GM12878 (cell line): ENCODE measurements at regions of chr2 and their contacts with region 1.

Region 1: DNA sequence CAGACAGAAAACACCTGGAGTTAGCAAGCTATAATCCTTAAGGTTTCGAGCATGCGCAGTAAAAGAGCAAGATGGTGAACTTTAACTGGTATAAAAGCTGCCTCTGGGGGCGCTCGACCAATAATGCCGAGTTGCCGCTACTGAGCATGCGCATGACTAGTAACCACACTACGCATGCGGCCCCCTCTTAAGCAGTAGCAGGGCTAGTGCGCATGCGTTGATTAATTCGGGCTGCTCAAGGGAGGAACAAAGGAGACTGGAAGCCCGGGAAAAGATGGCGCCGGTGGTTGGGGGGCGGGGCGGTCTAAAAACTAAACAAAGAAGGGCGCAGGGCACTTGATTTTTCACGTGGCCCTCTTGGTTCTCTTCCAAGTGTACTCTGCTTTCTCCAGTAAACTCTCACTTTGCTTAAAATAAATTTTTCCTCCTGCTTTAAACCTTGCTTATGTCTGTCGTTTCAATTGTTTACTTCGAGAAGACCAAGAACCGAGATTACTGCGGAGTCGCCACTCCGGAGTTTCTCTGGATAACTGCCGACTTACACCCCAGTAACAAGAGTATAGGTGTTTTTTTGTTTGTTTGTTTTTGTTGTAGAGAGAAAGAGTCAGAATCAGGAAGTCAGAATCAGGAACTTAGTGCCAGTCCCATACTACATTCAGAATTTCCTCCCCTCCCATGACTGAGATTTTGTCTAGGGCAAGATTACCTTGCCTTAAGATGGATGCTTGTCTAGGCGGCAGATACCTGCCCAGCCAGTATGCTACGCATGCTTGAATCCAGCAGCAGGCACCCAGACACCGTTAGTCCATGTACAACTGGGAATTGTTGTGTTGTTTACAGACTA is 5.8 kb downstream of the XRCC5 start:
- DNase-seq: peak; percentile 94
- ATAC-seq: peak; percentile 71
- H3K4me3 ChIP-seq: peak overlapping the region; percentile 93
- H3K27ac ChIP-seq: peak overlapping the region; percentile 99
- H3K4me1 ChIP-seq: peaks cover 29% of the 10 kb centered on the region
- H3K27me3 ChIP-seq: no peaks in the 10 kb centered on the region
- CTCF ChIP-seq: peak; percentile 79 to 97 (median 93)
- EP300 ChIP-seq: no peak
- POLR2A ChIP-seq: peak; percentile 67
- RAD21 ChIP-seq: no peak

Region 2: GRCh38 chr2:216013080-216013909 is 101.6 kb before region 1 on chr2 and contains the start of gene MREG:
- CTCF ChIA-PET with region 1: interaction called, 18 read pairs
- POLR2A ChIA-PET with region 1: no interaction called
- RAD21 ChIA-PET with region 1: interaction called, 5 read pairs
- SMC1A ChIA-PET with region 1: interaction called, 7 read pairs
- in situ Hi-C with region 1: no loop called
- intact Hi-C with region 1: loop called (anchors 1 kb)
- DNase-seq: no peak
- ATAC-seq: peak; percentile 45
- H3K4me3 ChIP-seq: peak within 1 kb of the TSS; percentile 94
- H3K27ac ChIP-seq: peak within 1 kb of the TSS; percentile 93
- H3K4me1 ChIP-seq: peaks cover 31% of the 10 kb centered on the region
- H3K27me3 ChIP-seq: no peaks in the 10 kb centered on the region
- CTCF ChIP-seq: peak; percentile 74 to 88 (median 78)
- EP300 ChIP-seq: no peak
- POLR2A ChIP-seq: peak; percentile 86
- RAD21 ChIP-seq: peak; percentile 54
- polyA plus RNA-seq, gene MREG: 16.8 to 21.3 TPM

Region 3: DNA sequence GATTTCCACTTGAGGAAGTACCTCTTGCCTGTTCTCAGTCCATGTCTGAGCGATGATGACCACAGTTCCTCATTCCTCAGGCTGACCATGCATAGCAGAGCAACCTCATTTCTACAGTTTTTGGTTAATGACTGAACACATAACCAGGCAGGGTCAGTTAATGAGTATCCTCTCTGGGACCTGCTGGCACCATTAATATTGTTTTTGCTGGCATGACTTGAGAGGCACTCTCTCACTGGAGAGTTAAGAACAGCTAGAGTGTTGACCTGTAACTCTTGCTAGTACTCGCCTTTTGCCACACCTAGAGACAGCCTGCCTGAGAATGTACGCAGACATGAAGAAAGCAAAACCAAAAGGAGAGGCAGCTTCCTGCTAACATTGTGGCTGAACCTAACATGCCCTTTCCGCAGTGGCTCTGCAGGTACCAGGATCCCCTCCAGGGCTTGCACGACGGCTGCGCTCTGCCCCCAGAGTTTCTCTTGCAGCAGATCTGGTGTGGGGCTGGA is 57.2 kb before region 1 on chr2:
- CTCF ChIA-PET with region 1: interaction called, 24 read pairs
- POLR2A ChIA-PET with region 1: interaction called, 8 read pairs
- RAD21 ChIA-PET with region 1: interaction called, 9 read pairs
- SMC1A ChIA-PET with region 1: interaction called, 59 read pairs
- in situ Hi-C with region 1: no loop called
- intact Hi-C with region 1: loop called (anchors 1 kb)
- DNase-seq: peak; percentile 96
- ATAC-seq: peak; percentile 93
- H3K4me3 ChIP-seq: peak overlapping the region; percentile 62
- H3K27ac ChIP-seq: peak overlapping the region; percentile 85
- H3K4me1 ChIP-seq: peaks cover 24% of the 10 kb centered on the region
- H3K27me3 ChIP-seq: no peaks in the 10 kb centered on the region
- CTCF ChIP-seq: no peak
- EP300 ChIP-seq: peak; percentile 55 to 66; a peak in 2 of 4 replicates
- POLR2A ChIP-seq: peak; percentile 68; the same call in 1 of the 2 replicates
- RAD21 ChIP-seq: no peak

Region 4: DNA sequence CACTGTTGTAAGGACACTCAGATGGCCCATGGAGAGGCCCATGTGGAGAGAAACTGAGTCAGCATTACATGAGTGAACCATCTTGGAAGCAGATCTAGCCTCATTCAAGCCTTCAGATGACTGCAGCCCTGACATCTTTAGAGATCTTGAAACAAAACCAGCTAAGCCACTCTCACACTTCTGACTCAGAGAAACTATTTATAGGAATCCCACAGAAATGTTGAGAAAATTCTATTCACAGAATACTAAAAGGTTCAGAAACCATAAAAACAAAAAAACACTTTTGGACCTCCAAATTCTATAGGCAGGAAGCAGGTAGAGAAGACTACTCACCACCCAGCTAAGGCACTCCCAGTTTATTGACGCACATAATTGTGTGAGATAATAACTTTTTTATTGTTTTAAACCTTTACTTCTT is 24.6 kb before region 1 on chr2:
- CTCF ChIA-PET with region 1: interaction called, 11 read pairs
- POLR2A ChIA-PET with region 1: interaction called, 42 read pairs
- RAD21 ChIA-PET with region 1: interaction called, 5 read pairs
- SMC1A ChIA-PET with region 1: interaction called, 8 read pairs
- in situ Hi-C with region 1: no loop called
- intact Hi-C with region 1: no loop called
- DNase-seq: no peak
- ATAC-seq: peak; percentile 70
- H3K4me3 ChIP-seq: peak overlapping the region; percentile 25; the same call in 1 of the 2 replicates
- H3K27ac ChIP-seq: peak overlapping the region; percentile 49
- H3K4me1 ChIP-seq: peaks cover 18% of the 10 kb centered on the region
- H3K27me3 ChIP-seq: no peaks in the 10 kb centered on the region
- CTCF ChIP-seq: no peak
- EP300 ChIP-seq: no peak
- POLR2A ChIP-seq: no peak
- RAD21 ChIP-seq: no peak

Region 5: DNA sequence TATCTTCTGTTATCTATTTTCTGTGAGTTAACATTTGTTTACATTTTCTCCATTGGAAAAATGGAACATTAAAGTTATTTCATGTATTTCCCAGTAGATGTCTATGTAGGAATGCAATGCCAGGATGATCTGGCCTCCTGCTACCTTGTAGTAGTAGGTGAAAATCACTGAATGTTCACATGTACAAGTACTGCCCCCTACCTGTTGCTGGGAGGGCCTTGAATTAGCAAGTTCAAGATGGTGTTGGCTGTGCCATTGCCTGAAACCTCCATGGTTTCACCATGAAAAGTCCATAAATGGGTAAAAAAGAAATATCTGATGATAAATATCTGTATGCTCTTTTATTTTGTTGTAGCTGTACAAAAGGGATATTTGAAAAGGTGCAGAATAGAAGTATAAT is 24.9 kb after region 1 on chr2:
- CTCF ChIA-PET with region 1: interaction called, 35 read pairs
- POLR2A ChIA-PET with region 1: interaction called, 7 read pairs
- RAD21 ChIA-PET with region 1: interaction called, 42 read pairs
- SMC1A ChIA-PET with region 1: interaction called, 31 read pairs
- in situ Hi-C with region 1: no loop called
- intact Hi-C with region 1: no loop called
- DNase-seq: no peak
- ATAC-seq: peak; percentile 57
- H3K4me3 ChIP-seq: no peak overlapping the region
- H3K27ac ChIP-seq: no peak overlapping the region
- H3K4me1 ChIP-seq: peaks cover 17% of the 10 kb centered on the region
- H3K27me3 ChIP-seq: no peaks in the 10 kb centered on the region
- CTCF ChIP-seq: peak; percentile 42 to 49 (median 42); a peak in 4 of 6 replicates
- EP300 ChIP-seq: no peak
- POLR2A ChIP-seq: no peak
- RAD21 ChIP-seq: peak; percentile 51

Region 6: GRCh38 chr2:216412022-216412999 is 297.4 kb after region 1 on chr2 and contains the start of gene SMARCAL1:
- CTCF ChIA-PET with region 1: interaction called, 6 read pairs
- POLR2A ChIA-PET with region 1: interaction called, 3 read pairs
- RAD21 ChIA-PET with region 1: interaction called, 3 read pairs
- SMC1A ChIA-PET with region 1: interaction called, 3 read pairs
- in situ Hi-C with region 1: no loop called
- intact Hi-C with region 1: loop called (anchors 5 kb)
- DNase-seq: peak; percentile 92
- ATAC-seq: peak; percentile 92
- H3K4me3 ChIP-seq: peak within 1 kb of the TSS; percentile 82
- H3K27ac ChIP-seq: peak within 1 kb of the TSS; percentile 97
- H3K4me1 ChIP-seq: peaks cover 10% of the 10 kb centered on the region
- H3K27me3 ChIP-seq: no peaks in the 10 kb centered on the region
- CTCF ChIP-seq: no peak
- EP300 ChIP-seq: no peak
- POLR2A ChIP-seq: peak; percentile 89
- RAD21 ChIP-seq: no peak
- polyA plus RNA-seq, gene SMARCAL1: 10.8 to 11.4 TPM

Region 7: GRCh38 chr2:216666461-216667233 is 551.7 kb after region 1 on chr2:
- CTCF ChIA-PET with region 1: interaction called, 3 read pairs
- POLR2A ChIA-PET with region 1: no interaction called
- RAD21 ChIA-PET with region 1: no interaction called
- SMC1A ChIA-PET with region 1: interaction called, 3 read pairs
- in situ Hi-C with region 1: no loop called
- intact Hi-C with region 1: loop called (anchors 10 kb)
- DNase-seq: peak; percentile 19
- ATAC-seq: peak; percentile 92
- H3K4me3 ChIP-seq: no peak overlapping the region
- H3K27ac ChIP-seq: no peak overlapping the region
- H3K4me1 ChIP-seq: no peaks in the 10 kb centered on the region
- H3K27me3 ChIP-seq: peaks cover 2 to 5% of the 10 kb centered on the region in 2 experiments
- CTCF ChIP-seq: peak; percentile 98 to 100 (median 98)
- EP300 ChIP-seq: no peak
- POLR2A ChIP-seq: no peak
- RAD21 ChIP-seq: peak; percentile 97